ENCODE measurements at regions of chr2 and their contacts with region 1.

Region 1: GRCh38 chr2:199911052-199911876 is at the start of gene C2orf69:
- DNase-seq: peak; percentile 99
- H3K4me3 ChIP-seq: peak within 1 kb of the TSS; percentile 54
- H3K4me3 Mint-ChIP-seq: peak within 1 kb of the TSS; percentile 93
- H3K27ac Mint-ChIP-seq: peak within 1 kb of the TSS; percentile 96
- H3K4me1 ChIP-seq: peaks cover 12% of the 10 kb centered on the region
- H3K4me1 Mint-ChIP-seq: peaks cover 23% of the 10 kb centered on the region
- H3K27me3 ChIP-seq: no peaks in the 10 kb centered on the region
- H3K27me3 Mint-ChIP-seq: no peaks in the 10 kb centered on the region
- CTCF ChIP-seq: no peak
- total RNA-seq, gene C2orf69: 16.6 and 17.1 TPM in 2 replicates

Region 2: GRCh38 chr2:199739413-199740110 is 171.7 kb before region 1 on chr2:
- CTCF ChIA-PET with region 1: no interaction called
- POLR2A ChIA-PET with region 1: no interaction called
- intact Hi-C with region 1: loop called (anchors 2 kb)
- DNase-seq: peak; percentile 66 to 77
- H3K4me3 ChIP-seq: no peak overlapping the region
- H3K4me3 Mint-ChIP-seq: no peak overlapping the region
- H3K27ac Mint-ChIP-seq: peak overlapping the region; percentile 43
- H3K4me1 ChIP-seq: peaks cover 43% of the 10 kb centered on the region
- H3K4me1 Mint-ChIP-seq: peaks cover 23% of the 10 kb centered on the region
- H3K27me3 ChIP-seq: no peaks in the 10 kb centered on the region
- H3K27me3 Mint-ChIP-seq: peaks cover 4% of the 10 kb centered on the region
- CTCF ChIP-seq: peak; percentile 79 to 91

Region 3: GRCh38 chr2:199850718-199851500 is 60.4 kb before region 1 on chr2 and contains the start of gene FTCDNL1:
- CTCF ChIA-PET with region 1: no interaction called
- POLR2A ChIA-PET with region 1: no interaction called
- intact Hi-C with region 1: loop called (anchors 2 kb)
- DNase-seq: peak; percentile 67 to 68
- H3K4me3 ChIP-seq: peak within 1 kb of the TSS; percentile 74
- H3K4me3 Mint-ChIP-seq: peak within 1 kb of the TSS; percentile 83
- H3K27ac Mint-ChIP-seq: peak within 1 kb of the TSS; percentile 56
- H3K4me1 ChIP-seq: no peaks in the 10 kb centered on the region
- H3K4me1 Mint-ChIP-seq: peaks cover 6% of the 10 kb centered on the region
- H3K27me3 ChIP-seq: no peaks in the 10 kb centered on the region
- H3K27me3 Mint-ChIP-seq: peaks cover 15% of the 10 kb centered on the region
- CTCF ChIP-seq: peak; percentile 74 to 78
- total RNA-seq, gene FTCDNL1: 0.35 and 0.68 TPM in 2 replicates

Region 4: GRCh38 chr2:199955339-199956261 is 44.3 kb after region 1 on chr2 and contains the starts of genes MAIP1 and TYW5:
- CTCF ChIA-PET with region 1: no interaction called
- POLR2A ChIA-PET with region 1: interaction called, 4 read pairs
- intact Hi-C with region 1: loop called (anchors 1 kb)
- DNase-seq: peak; percentile 91
- H3K4me3 ChIP-seq: peak within 1 kb of the TSS; percentile 99
- H3K4me3 Mint-ChIP-seq: peak within 1 kb of the TSS; percentile 96
- H3K27ac Mint-ChIP-seq: peak within 1 kb of the TSS; percentile 98
- H3K4me1 ChIP-seq: peaks cover 4% of the 10 kb centered on the region; the same call in 1 of the 2 replicates
- H3K4me1 Mint-ChIP-seq: peaks cover 10% of the 10 kb centered on the region
- H3K27me3 ChIP-seq: no peaks in the 10 kb centered on the region
- H3K27me3 Mint-ChIP-seq: no peaks in the 10 kb centered on the region
- CTCF ChIP-seq: peak in 1 of 2 experiments; percentile 36
- total RNA-seq, gene MAIP1: 39.4 and 42.1 TPM in 2 replicates
- total RNA-seq, gene TYW5: 13.9 and 14.5 TPM in 2 replicates